ENCODE measurements at regions of chr19 and their contacts with region 1.

Region 1: GRCh38 chr19:18058208-18059030 is 28.3 kb downstream of the IL12RB1 start:
- DNase-seq: peak; percentile 87
- ATAC-seq: peak; percentile 95

Region 2: DNA sequence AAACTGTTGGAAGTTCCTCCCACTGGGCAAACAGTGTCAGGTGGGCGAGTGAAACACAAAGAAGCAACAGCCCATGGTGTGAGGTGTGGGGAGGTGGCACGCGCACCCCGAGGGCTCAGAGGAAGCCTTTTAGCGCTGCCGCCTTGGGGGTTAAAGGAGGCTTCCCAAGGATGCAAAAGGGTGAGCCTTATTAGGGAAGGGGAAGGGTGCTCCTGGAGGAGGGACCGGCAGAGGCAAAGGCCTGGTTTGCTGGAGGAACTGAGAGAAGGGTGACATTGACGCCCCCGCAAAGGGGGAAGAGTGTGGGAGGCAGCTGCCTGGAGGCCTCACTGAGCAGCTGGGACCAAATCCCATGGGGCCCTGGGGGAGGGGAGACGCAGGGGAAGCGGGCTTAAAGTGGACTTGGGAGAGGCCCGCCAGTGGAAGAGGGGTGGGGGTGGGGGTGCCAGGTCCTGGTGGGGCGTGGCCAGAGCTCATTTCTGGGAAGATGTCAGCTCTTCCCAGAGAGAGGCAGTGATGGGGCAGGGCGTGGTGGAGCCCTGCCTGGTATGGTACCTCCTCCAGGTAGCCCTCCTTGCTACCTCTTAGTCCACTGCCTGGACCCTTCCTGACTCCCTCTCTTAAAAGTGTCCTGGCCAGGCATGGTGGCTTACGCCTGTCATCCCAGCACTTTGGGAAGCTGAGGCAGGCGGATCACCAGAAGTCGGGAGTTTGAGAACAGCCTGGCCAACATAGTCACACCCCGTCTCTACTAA is 319.1 kb before region 1 on chr19:
- intact Hi-C with region 1: no loop called
- DNase-seq: no peak
- ATAC-seq: no peak

Region 3: GRCh38 chr19:17947815-17948513 is 110.5 kb before region 1 on chr19:
- intact Hi-C with region 1: loop called (anchors 10 kb)
- DNase-seq: peak; percentile 93
- ATAC-seq: peak; percentile 95

Region 4: DNA sequence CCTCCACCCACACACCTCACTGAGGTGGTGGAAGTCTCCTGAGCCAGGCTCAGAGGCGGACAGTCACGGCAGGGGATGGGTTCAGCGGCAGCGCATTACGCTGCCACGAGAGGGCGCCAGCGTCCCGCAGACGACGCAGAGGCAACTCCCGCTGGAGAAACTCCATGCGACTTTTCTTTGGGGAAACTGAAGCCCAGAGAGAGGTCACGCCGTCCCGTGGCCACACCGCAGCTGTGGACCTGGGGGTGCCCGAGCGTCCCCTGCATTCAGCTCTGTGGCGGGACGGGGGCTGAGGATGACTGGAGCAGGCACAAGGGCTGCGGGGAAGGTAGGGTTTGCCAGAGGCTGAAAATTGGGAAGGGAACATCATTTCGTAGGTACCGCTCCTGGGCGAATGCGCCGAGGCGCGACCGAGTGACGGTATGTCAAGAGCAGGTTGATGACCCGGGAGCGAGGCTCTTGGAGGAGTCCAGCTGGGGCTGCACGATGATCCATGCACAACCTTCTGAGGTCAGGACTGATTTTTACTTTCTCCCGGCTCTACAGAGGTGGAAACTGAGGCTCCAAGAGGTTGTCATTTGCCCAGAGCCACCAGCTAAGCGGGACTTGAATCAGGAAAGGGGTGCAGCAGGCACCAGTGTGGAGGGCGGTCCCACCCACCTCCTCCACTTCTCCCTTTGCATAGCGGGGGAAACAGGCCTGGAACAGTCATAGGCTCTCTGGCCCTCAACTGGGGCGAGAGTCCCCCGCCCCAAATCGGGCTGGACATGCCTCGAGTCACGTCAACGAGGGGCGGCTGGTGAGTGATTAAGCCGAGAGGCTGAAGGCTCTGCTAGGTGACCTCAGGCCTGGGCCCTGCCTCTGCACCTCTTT is 51.1 kb before region 1 on chr19:
- intact Hi-C with region 1: loop called (anchors 1 kb)
- DNase-seq: peak; percentile 91
- ATAC-seq: peak; percentile 92

Region 5: DNA sequence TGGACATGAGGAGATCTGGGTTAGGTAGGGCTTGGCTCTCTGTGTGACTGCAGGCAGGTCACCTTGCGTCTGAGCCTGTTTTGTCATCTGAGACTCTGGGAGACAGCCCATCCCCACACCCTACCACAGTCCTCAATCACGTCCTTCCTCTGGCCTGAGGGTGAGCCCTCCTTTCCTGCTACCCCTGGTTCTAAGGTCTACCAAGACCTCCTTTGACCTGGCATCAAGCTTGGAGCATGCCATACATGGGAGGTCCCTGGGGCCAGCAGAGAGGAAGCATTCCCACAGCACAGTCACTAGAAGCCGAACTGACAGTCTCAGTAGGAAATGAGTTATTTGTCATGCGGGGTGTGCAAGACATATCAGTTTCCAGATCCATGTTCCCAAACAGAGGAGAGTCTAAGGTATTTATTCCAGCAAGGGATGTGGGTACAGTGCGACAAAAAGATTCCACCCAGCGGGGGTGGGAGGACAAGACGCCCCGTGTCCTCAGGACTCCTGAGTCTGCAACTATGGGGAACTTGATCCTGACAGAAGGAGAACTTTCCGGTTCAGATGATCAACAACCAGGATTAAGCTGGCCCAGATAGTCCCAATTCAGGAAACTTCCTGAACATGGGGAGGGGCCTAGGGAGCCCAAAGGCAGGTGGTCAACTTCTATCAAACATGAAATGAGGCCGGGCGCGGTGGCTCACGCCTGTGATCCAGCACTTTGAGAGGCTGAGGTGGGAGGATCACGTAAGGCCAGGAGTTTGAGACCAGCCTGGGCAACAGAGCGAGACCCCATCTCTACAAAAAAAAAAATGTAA is 40.9 kb before region 1 on chr19:
- intact Hi-C with region 1: loop called (anchors 5 kb)
- DNase-seq: no peak
- ATAC-seq: peak; percentile 16